PC-9 (cell line): ENCODE measurements at regions of chr12 and their contacts with region 1.

Region 1: GRCh38 chr12:79373896-79374499 is 316.8 kb downstream of the PAWR start:
- DNase-seq: peak in 1 of 2 experiments; percentile 33
- H3K4me3 ChIP-seq: no peak overlapping the region
- H3K27ac ChIP-seq: no peak overlapping the region
- H3K4me1 ChIP-seq: no peaks in the 10 kb centered on the region
- H3K27me3 ChIP-seq: no peaks in the 10 kb centered on the region
- CTCF ChIP-seq: peak; percentile 85

Region 2: GRCh38 chr12:77599782-77600467 is 1774.1 kb before region 1 on chr12:
- CTCF ChIA-PET with region 1: no interaction called
- POLR2A ChIA-PET with region 1: no interaction called
- intact Hi-C with region 1: no loop called
- DNase-seq: no peak
- H3K4me3 ChIP-seq: no peak overlapping the region
- H3K27ac ChIP-seq: no peak overlapping the region
- H3K4me1 ChIP-seq: no peaks in the 10 kb centered on the region
- H3K27me3 ChIP-seq: no peaks in the 10 kb centered on the region
- CTCF ChIP-seq: no peak

Region 3: DNA sequence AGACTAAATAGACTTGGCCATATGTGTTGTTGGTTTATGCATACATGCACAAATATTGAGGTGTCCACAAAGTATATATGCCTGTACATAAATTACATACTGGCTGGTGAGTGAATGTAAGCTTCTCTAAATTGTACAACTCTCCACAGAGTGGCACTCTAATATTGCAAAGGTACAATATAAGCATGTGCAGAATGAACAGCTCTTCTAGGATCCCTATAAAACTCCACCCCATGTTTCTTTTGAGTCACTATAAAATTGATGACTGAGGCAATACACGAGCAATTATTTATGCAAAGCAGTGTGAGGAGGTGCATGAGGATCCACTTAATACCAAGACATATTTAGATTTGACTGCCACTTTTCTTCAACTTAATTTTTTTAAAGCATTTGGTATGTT is 1371.1 kb before region 1 on chr12:
- CTCF ChIA-PET with region 1: no interaction called
- POLR2A ChIA-PET with region 1: no interaction called
- intact Hi-C with region 1: loop called (anchors 10 kb)
- DNase-seq: no peak
- H3K4me3 ChIP-seq: no peak overlapping the region
- H3K27ac ChIP-seq: no peak overlapping the region
- H3K4me1 ChIP-seq: no peaks in the 10 kb centered on the region
- H3K27me3 ChIP-seq: no peaks in the 10 kb centered on the region
- CTCF ChIP-seq: no peak

Region 4: GRCh38 chr12:78146365-78146772 is 1227.6 kb before region 1 on chr12:
- CTCF ChIA-PET with region 1: no interaction called
- POLR2A ChIA-PET with region 1: no interaction called
- intact Hi-C with region 1: loop called (anchors 10 kb)
- DNase-seq: no peak
- H3K4me3 ChIP-seq: no peak overlapping the region
- H3K27ac ChIP-seq: no peak overlapping the region
- H3K4me1 ChIP-seq: no peaks in the 10 kb centered on the region
- H3K27me3 ChIP-seq: no peaks in the 10 kb centered on the region
- CTCF ChIP-seq: peak; percentile 86

Region 5: GRCh38 chr12:79033788-79034187 is 340.2 kb before region 1 on chr12:
- CTCF ChIA-PET with region 1: no interaction called
- POLR2A ChIA-PET with region 1: no interaction called
- intact Hi-C with region 1: no loop called
- DNase-seq: no peak
- H3K4me3 ChIP-seq: no peak overlapping the region
- H3K27ac ChIP-seq: no peak overlapping the region
- H3K4me1 ChIP-seq: no peaks in the 10 kb centered on the region
- H3K27me3 ChIP-seq: no peaks in the 10 kb centered on the region
- CTCF ChIP-seq: no peak